Naive thymus-derived CD4-positive, alpha-beta T cell (primary cell): ENCODE measurements at regions of chr1 and their contacts with region 1.

Region 1: GRCh38 chr1:42924082-42924850 is 34.4 kb downstream of the SLC2A1 start:
- DNase-seq: peak; percentile 85 to 93 (median 92)
- ATAC-seq: peak; percentile 96
- H3K4me3 ChIP-seq: peak overlapping the region; percentile 99
- H3K4me3 Mint-ChIP-seq: peak overlapping the region; percentile 77 to 98 (median 92)
- H3K27ac ChIP-seq: peak overlapping the region; percentile 82
- H3K27ac Mint-ChIP-seq: peak overlapping the region; percentile 79 to 98 (median 96)
- H3K4me1 ChIP-seq: peaks cover 15 to 16% of the 10 kb centered on the region in 2 donors
- H3K4me1 Mint-ChIP-seq: peaks cover 16 to 50% (median 39%) of the 10 kb centered on the region in 7 donors
- H3K27me3 ChIP-seq: no peaks in the 10 kb centered on the region
- H3K27me3 Mint-ChIP-seq: no peaks in the 10 kb centered on the region

Region 2: DNA sequence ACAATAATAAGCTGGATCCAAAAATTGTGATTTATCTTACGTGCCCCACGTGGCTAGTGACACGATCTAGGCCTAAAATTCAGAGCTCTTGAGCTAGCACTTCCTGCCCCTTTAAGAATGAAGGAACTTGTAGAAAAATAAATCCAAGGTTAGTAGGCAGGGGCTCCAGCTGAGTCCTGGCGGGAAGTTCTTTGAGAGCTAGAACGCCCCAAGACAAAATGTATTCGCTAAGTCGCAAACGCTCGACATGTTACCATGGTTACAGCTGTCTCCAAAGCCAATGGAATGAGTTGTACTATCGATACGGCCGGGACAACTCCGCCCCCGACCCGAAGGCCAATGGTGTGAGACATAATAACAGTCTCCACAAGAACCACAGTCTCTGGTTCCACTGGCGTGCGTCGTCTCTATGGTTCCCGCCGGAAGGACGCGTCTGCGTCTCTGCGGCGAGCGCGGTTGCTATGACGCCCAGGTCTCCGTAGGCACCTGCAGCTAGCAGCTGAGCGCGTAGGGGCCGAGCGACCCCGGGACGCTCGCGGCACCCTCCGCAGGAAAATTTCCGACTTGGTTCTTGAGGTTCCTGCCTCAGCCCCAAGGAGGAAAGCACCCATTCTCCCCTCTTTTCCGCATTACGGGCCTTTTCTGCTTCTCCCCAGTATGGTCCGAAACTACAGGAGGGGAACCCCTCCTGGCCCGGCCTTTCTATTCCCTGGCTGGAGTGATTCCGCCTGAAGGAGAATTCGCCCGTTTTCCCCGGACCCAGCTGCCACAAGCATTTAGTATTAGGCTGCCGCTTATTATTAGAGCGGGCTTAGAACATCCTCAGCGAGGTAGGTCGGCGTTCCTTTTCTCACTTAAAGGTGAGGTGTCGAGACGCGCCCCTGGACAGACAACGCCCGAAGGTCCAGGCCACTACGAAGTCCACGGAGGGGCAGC is 461.2 kb before region 1 on chr1 and contains the start of gene CCDC30:
- CTCF ChIA-PET with region 1: no interaction called
- POLR2A ChIA-PET with region 1: no interaction called
- intact Hi-C with region 1: loop called in 1 of 2 experiments (anchors 1 kb)
- DNase-seq: peak; percentile 75 to 99 (median 98)
- ATAC-seq: peak; percentile 99
- H3K4me3 ChIP-seq: peak within 1 kb of the TSS; percentile 50
- H3K4me3 Mint-ChIP-seq: peak within 1 kb of the TSS; percentile 74 to 92 (median 86)
- H3K27ac ChIP-seq: peak within 1 kb of the TSS; percentile 86
- H3K27ac Mint-ChIP-seq: peak within 1 kb of the TSS; percentile 87 to 98 (median 93)
- H3K4me1 ChIP-seq: peaks cover 14 to 18% of the 10 kb centered on the region in 2 donors
- H3K4me1 Mint-ChIP-seq: peaks cover 14 to 57% (median 49%) of the 10 kb centered on the region in 7 donors
- H3K27me3 ChIP-seq: no peaks in the 10 kb centered on the region
- H3K27me3 Mint-ChIP-seq: peaks cover 0 to 20% (median 0%) of the 10 kb centered on the region in 5 donors
- total RNA-seq, gene CCDC30: 2.3 to 5.3 (median 4.2) TPM

Region 3: DNA sequence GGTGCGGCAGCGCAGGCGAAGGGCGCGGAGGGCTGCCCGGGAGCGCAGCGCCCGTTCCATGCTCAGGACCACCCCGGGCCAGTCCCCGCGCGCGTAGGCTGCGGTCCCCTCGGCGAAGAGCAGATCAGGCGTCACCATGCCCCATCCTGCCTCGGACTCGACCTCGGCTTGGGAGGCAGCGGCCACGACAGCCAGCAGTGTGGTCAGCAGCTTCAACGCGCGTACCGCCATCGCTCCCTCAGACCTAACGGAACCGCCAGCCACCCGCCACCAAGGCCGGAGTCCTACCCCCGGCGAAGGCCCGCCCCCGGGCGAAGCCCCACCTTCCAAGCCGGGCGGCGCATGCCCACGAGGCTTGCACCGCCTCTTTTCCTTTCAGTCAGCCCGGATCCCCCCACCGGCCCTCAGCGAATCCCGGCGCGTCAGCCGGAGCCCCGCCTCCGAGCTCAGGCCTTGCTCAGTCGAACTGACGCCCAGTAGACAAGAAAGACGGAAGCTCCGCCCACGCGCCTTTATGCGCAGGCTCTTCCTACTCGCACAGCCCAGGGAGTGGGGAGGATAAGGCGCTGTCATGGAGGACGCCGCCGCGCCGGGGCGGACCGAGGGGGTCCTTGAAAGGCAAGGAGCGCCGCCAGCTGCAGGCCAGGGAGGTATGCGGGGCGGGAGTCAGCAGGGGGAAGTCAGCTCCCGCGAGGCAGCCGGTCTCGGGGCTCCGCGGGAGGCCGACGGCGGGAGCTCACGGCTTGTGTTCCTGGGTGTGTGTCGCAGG is 157.3 kb before region 1 on chr1 and contains the starts of genes C1orf50 and P3H1:
- CTCF ChIA-PET with region 1: interaction called, 3 read pairs
- POLR2A ChIA-PET with region 1: interaction called, 15 read pairs
- intact Hi-C with region 1: loop called (anchors 1 to 2 kb)
- DNase-seq: peak; percentile 98 to 100 (median 100)
- ATAC-seq: peak; percentile 96
- H3K4me3 ChIP-seq: peak within 1 kb of the TSS; percentile 91
- H3K4me3 Mint-ChIP-seq: peak within 1 kb of the TSS in 1 of 10 donors; percentile 92
- H3K27ac ChIP-seq: peak within 1 kb of the TSS; percentile 84
- H3K27ac Mint-ChIP-seq: peak within 1 kb of the TSS in 8 of 9 donors; percentile 70 to 96 (median 92)
- H3K4me1 ChIP-seq: peaks cover 25 to 35% of the 10 kb centered on the region in 2 donors
- H3K4me1 Mint-ChIP-seq: peaks cover 20 to 50% (median 32%) of the 10 kb centered on the region in 7 donors
- H3K27me3 ChIP-seq: no peaks in the 10 kb centered on the region
- H3K27me3 Mint-ChIP-seq: no peaks in the 10 kb centered on the region
- total RNA-seq, gene C1orf50: 7.0 to 20.8 (median 18.1) TPM
- total RNA-seq, gene P3H1: 32.5 to 61.8 (median 47.3) TPM

Region 4: DNA sequence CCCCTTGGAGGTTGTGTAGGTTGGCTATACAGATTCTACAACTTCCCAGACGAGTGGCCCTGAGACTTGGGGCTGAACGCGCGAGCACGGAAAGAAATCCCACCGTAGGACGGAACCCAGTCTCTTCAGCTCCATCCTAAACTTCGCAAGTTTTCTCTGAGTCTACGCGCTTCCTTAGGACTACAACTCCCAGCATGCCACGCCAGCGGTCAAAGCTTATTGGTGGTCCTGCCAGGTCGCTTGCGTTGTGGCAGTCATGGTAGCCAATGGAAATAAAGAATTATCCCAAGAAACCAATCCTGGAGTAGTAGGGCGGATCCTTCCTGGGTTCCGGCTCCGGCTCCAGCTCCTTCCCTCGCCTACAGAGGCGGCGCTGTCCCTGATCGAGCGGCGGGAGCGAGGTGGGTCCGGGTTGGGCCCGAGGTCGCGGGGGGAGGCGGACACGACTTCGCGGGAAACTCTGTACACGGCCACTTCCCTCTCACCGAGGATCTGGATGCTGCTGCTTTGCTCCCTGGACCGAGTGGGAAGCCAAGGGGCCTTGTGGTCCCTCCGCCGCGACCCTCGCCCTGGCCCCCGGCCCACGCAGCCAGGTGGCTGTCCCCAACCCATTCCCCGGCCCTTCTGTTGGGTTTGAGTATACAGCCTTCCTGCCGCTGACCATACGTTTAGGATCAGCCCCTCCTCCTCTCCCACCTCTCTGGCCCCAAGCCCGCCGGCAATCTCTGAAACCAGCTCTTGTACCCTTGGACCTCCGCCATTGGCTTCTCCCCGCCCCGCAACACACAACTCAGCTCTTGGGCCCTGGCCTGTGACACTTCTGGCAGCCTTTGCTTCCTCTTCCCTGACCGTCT is 77.8 kb before region 1 on chr1 and contains the start of gene ZNF691:
- CTCF ChIA-PET with region 1: no interaction called
- POLR2A ChIA-PET with region 1: no interaction called
- intact Hi-C with region 1: loop called (anchors 1 kb)
- DNase-seq: peak; percentile 51 to 91 (median 84)
- ATAC-seq: peak; percentile 99
- H3K4me3 ChIP-seq: peak within 1 kb of the TSS; percentile 97
- H3K4me3 Mint-ChIP-seq: peak within 1 kb of the TSS; percentile 84 to 100 (median 96)
- H3K27ac ChIP-seq: peak within 1 kb of the TSS; percentile 72
- H3K27ac Mint-ChIP-seq: peak within 1 kb of the TSS; percentile 71 to 95 (median 85)
- H3K4me1 ChIP-seq: peaks cover 11 to 22% of the 10 kb centered on the region in 2 donors
- H3K4me1 Mint-ChIP-seq: peaks cover 19 to 38% (median 31%) of the 10 kb centered on the region in 7 donors
- H3K27me3 ChIP-seq: no peaks in the 10 kb centered on the region
- H3K27me3 Mint-ChIP-seq: no peaks in the 10 kb centered on the region
- total RNA-seq, gene ZNF691: 3.5 to 17.2 (median 12.8) TPM

Region 5: GRCh38 chr1:42941640-42942330 is 17.5 kb after region 1 on chr1:
- CTCF ChIA-PET with region 1: no interaction called
- POLR2A ChIA-PET with region 1: interaction called, 134 read pairs
- intact Hi-C with region 1: no loop called
- DNase-seq: peak in 1 of 9 donors; percentile 3
- ATAC-seq: no peak
- H3K4me3 ChIP-seq: no peak overlapping the region
- H3K4me3 Mint-ChIP-seq: peak overlapping the region in 4 of 10 donors; percentile 9 to 78 (median 65)
- H3K27ac ChIP-seq: no peak overlapping the region
- H3K27ac Mint-ChIP-seq: peak overlapping the region in 8 of 9 donors; percentile 69 to 95 (median 86)
- H3K4me1 ChIP-seq: peaks cover 82 to 95% of the 10 kb centered on the region in 2 donors
- H3K4me1 Mint-ChIP-seq: peaks cover 85 to 99% (median 97%) of the 10 kb centered on the region in 7 donors
- H3K27me3 ChIP-seq: no peaks in the 10 kb centered on the region
- H3K27me3 Mint-ChIP-seq: no peaks in the 10 kb centered on the region

Region 6: DNA sequence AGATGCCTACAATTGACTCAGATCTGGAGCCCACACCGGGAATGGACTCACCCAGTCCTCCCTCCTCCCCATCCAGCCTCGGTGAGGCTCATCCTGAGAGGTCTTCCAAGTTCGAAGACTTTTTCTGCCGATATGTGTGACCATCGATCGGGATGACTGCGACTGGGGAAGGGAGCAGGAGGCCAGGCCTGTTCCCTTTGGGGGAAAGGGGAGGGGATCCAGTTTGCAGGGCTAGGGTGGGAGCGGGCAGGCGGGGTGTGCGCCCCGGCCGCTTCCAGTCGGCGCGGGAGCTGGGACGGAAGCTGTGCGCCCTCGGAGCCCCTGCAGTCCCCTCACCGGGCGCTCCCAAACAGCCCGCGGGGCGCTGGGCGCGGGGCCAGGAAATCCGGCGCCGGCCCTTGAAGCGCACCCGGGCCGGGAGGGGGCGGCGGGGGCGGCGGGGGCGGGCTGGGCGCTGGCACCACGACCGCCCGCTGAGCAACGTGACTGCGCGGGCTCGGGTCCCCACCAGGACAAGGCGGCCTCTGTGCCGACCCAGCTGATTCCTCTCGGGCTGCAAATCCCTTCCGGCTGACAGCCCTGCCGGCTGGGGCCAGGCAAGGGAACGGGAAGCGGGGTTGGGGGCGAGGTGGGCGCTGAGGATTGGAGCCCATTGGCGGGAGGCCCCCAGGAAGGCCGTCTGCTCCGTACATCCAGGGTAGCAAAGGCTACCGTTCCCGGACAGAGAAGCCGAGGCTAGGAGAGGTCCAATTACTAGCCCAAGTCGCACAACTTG is 143.9 kb after region 1 on chr1:
- CTCF ChIA-PET with region 1: interaction called, 288 read pairs
- POLR2A ChIA-PET with region 1: interaction called, 32 read pairs
- intact Hi-C with region 1: loop called (anchors 1 kb)
- DNase-seq: peak in 4 of 9 donors; percentile 14 to 33 (median 19)
- ATAC-seq: peak; percentile 46
- H3K4me3 ChIP-seq: no peak overlapping the region
- H3K4me3 Mint-ChIP-seq: peak overlapping the region; percentile 29 to 81 (median 76)
- H3K27ac ChIP-seq: no peak overlapping the region
- H3K27ac Mint-ChIP-seq: peak overlapping the region in 4 of 9 donors; percentile 59 to 84 (median 78)
- H3K4me1 ChIP-seq: peaks cover 5% of the 10 kb centered on the region in 2 donors
- H3K4me1 Mint-ChIP-seq: peaks cover 6 to 12% (median 8%) of the 10 kb centered on the region in 7 donors
- H3K27me3 ChIP-seq: no peaks in the 10 kb centered on the region
- H3K27me3 Mint-ChIP-seq: peaks cover 0 to 8% (median 0%) of the 10 kb centered on the region in 5 donors

Region 7: DNA sequence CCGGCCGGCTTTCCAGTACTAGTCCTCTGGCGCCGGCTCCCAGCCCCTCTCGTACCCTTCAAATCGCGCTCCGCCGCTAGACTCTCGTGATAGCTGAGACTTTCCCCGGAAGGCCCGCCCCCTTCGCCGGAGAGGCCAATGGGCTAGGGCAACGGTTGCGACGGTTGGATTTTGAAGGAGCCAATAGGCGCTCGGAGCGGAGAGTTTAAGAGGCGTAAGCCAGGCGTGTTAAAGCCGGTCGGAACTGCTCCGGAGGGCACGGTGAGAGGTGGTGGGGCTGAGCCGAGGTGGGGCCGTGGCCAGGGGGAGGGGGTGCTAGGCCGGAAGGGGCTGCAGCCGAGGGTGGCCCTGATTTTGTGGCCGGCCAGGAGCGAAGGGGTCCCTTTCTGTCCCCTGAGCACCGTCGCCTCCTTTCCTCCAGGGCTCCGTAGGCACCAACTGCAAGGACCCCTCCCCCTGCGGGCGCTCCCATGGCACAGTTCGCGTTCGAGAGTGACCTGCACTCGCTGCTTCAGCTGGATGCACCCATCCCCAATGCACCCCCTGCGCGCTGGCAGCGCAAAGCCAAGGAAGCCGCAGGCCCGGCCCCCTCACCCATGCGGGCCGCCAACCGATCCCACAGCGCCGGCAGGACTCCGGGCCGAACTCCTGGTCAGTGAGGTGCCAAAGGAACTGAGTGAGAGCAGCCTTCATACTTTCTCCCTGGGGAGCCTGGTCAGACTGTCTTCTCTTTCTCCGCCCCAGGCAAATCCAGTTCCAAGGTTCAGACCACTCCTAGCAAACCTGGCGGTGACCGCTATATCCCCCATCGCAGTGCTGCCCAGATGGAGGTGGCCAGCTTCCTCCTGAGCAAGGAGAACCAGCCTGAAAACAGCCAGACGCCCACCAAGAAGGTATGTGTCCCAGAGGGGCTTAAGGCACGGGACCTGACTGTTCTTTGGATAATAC is 434.8 kb after region 1 on chr1 and contains the start of gene CDC20:
- CTCF ChIA-PET with region 1: no interaction called
- POLR2A ChIA-PET with region 1: no interaction called
- intact Hi-C with region 1: loop called (anchors 1 to 10 kb)
- DNase-seq: peak; percentile 91 to 99 (median 96)
- ATAC-seq: peak; percentile 100
- H3K4me3 ChIP-seq: peak within 1 kb of the TSS; percentile 90
- H3K4me3 Mint-ChIP-seq: peak within 1 kb of the TSS; percentile 74 to 97 (median 90)
- H3K27ac ChIP-seq: peak within 1 kb of the TSS; percentile 78
- H3K27ac Mint-ChIP-seq: peak within 1 kb of the TSS; percentile 22 to 88 (median 87)
- H3K4me1 ChIP-seq: peaks cover 5 to 10% of the 10 kb centered on the region in 2 donors
- H3K4me1 Mint-ChIP-seq: peaks cover 10 to 55% (median 20%) of the 10 kb centered on the region in 7 donors
- H3K27me3 ChIP-seq: no peaks in the 10 kb centered on the region
- H3K27me3 Mint-ChIP-seq: no peaks in the 10 kb centered on the region
- total RNA-seq, gene CDC20: 0.38 to 101 (median 0.78) TPM